ENCODE measurements at regions of chr7 and their contacts with region 1.

Region 1: DNA sequence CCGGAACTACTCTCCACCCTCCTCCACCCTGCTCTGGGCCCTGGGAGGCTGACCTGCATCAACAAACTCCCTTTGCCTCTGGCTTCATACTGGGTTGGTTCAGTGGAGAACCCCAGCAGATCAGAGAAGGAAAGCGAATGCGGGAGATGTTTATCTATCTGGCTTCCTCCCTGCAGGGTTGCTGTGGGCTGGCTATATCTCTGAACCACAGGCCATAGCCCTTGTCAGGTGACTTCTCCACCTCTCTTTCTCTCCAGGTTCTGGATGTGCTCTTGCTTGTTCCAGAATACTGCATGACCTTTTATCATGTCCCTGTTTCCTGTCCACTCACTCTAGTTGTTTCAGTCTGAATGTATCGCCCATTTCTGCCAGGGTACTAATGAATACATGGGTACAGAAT is 51.7 kb upstream of the IFRD1 start:
- DNase-seq: no peak
- H3K4me3 ChIP-seq: no peak overlapping the region
- H3K27ac ChIP-seq: no peak overlapping the region
- H3K4me1 ChIP-seq: no peaks in the 10 kb centered on the region
- H3K27me3 ChIP-seq: no peaks in the 10 kb centered on the region
- CTCF ChIP-seq: no peak

Region 2: DNA sequence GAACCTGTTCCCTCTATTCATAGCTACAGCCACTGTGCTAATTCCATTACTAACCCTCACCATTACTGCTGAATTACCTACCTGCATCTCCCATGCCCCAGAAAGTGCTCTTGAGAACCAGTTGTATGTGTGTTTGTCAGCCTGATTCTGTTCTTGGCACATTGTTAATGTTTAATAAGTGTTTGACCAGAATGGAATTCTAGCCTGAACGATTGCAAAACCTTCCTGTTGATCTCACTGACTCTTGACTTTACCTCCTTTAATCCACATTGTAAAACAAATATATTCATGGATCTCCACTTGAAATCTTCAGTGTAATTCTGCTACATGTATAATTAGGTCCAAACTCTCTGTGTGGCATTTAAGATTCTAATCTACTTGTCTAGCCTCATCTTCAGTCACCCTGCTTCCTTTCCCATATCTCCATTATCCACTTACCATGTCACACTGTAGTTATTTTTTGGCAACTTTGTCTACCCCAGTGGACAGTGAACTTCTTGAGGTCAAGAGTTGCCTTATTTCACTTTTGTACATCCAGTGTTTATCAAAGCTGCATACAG is 187.1 kb before region 1 on chr7:
- intact Hi-C with region 1: loop called (anchors 10 kb)
- DNase-seq: no peak
- H3K4me3 ChIP-seq: no peak overlapping the region
- H3K27ac ChIP-seq: no peak overlapping the region
- H3K4me1 ChIP-seq: peaks cover 7% of the 10 kb centered on the region
- H3K27me3 ChIP-seq: no peaks in the 10 kb centered on the region
- CTCF ChIP-seq: no peak

Region 3: GRCh38 chr7:112462236-112462635 is 63.7 kb after region 1 on chr7:
- intact Hi-C with region 1: no loop called
- DNase-seq: peak; percentile 50
- H3K4me3 ChIP-seq: no peak overlapping the region
- H3K27ac ChIP-seq: no peak overlapping the region
- H3K4me1 ChIP-seq: no peaks in the 10 kb centered on the region
- H3K27me3 ChIP-seq: no peaks in the 10 kb centered on the region
- CTCF ChIP-seq: no peak

Region 4: DNA sequence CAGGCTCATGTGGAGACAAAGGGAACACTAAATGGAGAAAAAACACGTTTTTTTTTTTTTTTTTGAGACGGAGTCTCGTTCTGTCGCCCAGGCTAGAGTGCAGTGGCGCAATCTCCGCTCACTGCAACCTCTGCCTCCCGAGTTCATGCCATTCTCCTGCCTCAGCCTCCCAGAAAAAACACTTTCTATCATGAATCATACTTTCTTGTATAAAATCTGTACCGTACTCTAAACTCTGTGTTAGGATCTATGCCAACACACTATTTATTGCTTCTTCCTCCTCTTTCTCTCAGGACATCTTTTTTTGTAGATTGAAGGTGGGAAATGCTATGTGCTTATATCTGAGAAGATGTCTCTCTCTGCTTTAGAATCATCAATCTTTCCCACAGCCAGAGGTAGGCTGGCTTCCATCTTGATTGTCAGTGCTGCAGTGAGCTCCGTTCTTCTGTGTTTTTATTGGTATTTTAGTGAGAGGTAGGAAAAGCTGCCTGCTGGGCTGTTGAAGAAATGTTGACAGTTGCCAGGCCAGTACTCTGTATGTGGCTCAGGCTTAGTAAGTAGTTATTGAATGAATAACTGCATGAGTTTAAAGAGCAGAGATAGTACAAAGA is 586.9 kb after region 1 on chr7:
- intact Hi-C with region 1: no loop called
- DNase-seq: no peak
- H3K4me3 ChIP-seq: no peak overlapping the region
- H3K27ac ChIP-seq: no peak overlapping the region
- H3K4me1 ChIP-seq: no peaks in the 10 kb centered on the region
- H3K27me3 ChIP-seq: no peaks in the 10 kb centered on the region
- CTCF ChIP-seq: no peak